ENCODE measurements at regions of chr13 and their contacts with region 1.

Region 1: GRCh38 chr13:38686577-38687245 is at the start of gene FREM2:
- DNase-seq: peak; percentile 76
- H3K4me3 ChIP-seq: peak within 1 kb of the TSS; percentile 59 to 63 (median 59)
- H3K27ac ChIP-seq: no peak within 1 kb of the TSS
- H3K4me1 ChIP-seq: peaks cover 16% of the 10 kb centered on the region
- H3K27me3 ChIP-seq: peaks cover 5% of the 10 kb centered on the region
- CTCF ChIP-seq: no peak
- total RNA-seq, gene FREM2: 0.16 to 5.7 TPM

Region 2: GRCh38 chr13:38763439-38764381 is 77.0 kb after region 1 on chr13:
- CTCF ChIA-PET with region 1: no interaction called
- dilution Hi-C with region 1: no loop called
- in situ Hi-C with region 1: no loop called
- intact Hi-C with region 1: loop called (anchors 1 kb)
- DNase-seq: peak; percentile 23
- H3K4me3 ChIP-seq: no peak overlapping the region
- H3K27ac ChIP-seq: no peak overlapping the region
- H3K4me1 ChIP-seq: peaks cover 10% of the 10 kb centered on the region
- H3K27me3 ChIP-seq: no peaks in the 10 kb centered on the region
- CTCF ChIP-seq: peak; percentile 75 to 83

Region 3: GRCh38 chr13:38796890-38797289 is 110.2 kb after region 1 on chr13:
- CTCF ChIA-PET with region 1: no interaction called
- dilution Hi-C with region 1: no loop called
- in situ Hi-C with region 1: no loop called
- intact Hi-C with region 1: no loop called
- DNase-seq: no peak
- H3K4me3 ChIP-seq: no peak overlapping the region
- H3K27ac ChIP-seq: no peak overlapping the region
- H3K4me1 ChIP-seq: no peaks in the 10 kb centered on the region
- H3K27me3 ChIP-seq: no peaks in the 10 kb centered on the region
- CTCF ChIP-seq: no peak

Region 4: DNA sequence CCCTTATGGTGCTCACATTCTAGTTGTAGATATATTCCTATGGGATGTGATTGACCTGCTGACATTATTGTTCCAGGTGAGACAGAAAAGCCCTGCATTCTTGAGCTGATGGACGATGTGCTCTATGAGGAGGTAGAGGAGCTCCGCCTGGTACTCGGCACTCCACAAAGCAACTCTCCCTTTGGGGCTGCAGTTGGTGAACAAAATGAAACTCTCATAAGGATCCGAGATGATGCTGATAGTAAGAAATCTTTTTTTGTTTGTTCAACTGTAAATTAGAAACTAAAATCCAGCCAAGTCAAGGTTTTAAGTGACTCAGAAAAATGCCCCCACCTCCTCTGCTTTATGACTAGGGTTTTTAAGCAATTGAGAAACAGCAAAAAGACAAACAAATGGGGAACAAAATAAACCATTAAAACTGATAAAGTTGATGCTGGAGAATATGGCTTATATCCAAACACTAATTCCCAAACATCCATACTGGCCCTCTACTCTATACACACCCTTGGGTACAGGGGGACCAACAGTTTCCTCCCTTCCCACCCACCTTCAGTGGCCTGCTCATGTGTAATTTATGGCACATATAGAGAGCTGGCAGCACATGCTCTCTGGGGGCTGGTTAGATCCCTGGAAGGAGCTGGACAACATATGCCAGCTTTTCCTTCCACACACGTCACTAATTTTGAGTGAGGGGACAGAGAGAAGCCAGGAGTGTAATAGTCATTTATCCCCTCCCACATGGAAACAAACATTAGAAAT is 164.3 kb after region 1 on chr13:
- CTCF ChIA-PET with region 1: interaction called, 10 read pairs
- dilution Hi-C with region 1: loop called (anchors 25 kb)
- in situ Hi-C with region 1: loop called in 1 of 2 experiments (anchors 25 kb)
- intact Hi-C with region 1: no loop called
- DNase-seq: no peak
- H3K4me3 ChIP-seq: no peak overlapping the region
- H3K27ac ChIP-seq: no peak overlapping the region
- H3K4me1 ChIP-seq: peaks cover 13% of the 10 kb centered on the region
- H3K27me3 ChIP-seq: no peaks in the 10 kb centered on the region
- CTCF ChIP-seq: no peak

Region 5: GRCh38 chr13:38872693-38873092 is 186.0 kb after region 1 on chr13:
- CTCF ChIA-PET with region 1: no interaction called
- dilution Hi-C with region 1: loop called (anchors 25 kb)
- in situ Hi-C with region 1: loop called in 1 of 2 experiments (anchors 25 kb)
- intact Hi-C with region 1: loop called (anchors 1 kb)
- DNase-seq: peak; percentile 28
- H3K4me3 ChIP-seq: no peak overlapping the region
- H3K27ac ChIP-seq: no peak overlapping the region
- H3K4me1 ChIP-seq: no peaks in the 10 kb centered on the region
- H3K27me3 ChIP-seq: no peaks in the 10 kb centered on the region
- CTCF ChIP-seq: peak; percentile 79 to 81

Region 6: DNA sequence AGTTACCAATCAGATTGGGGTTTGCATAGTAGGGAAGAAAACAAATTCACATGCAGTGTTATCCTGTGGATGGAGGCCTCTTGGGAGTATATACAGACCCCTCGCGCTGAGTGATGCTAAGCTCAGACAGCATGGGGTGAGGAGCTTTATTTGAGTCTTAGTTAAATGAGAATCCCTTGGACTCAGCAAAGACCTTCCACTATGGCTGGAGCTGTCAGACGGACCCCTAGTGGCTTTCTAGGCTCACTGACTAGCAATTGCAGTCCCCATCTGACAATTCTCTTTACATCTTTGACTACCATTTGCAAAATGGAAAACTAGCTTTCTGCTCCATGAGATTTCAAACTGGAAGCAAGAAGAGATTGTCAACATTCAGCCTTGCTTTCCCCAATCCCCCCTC is 213.5 kb after region 1 on chr13:
- CTCF ChIA-PET with region 1: no interaction called
- dilution Hi-C with region 1: no loop called
- in situ Hi-C with region 1: loop called in 1 of 2 experiments (anchors 25 kb)
- intact Hi-C with region 1: no loop called
- DNase-seq: no peak
- H3K4me3 ChIP-seq: no peak overlapping the region
- H3K27ac ChIP-seq: no peak overlapping the region
- H3K4me1 ChIP-seq: peaks cover 21% of the 10 kb centered on the region
- H3K27me3 ChIP-seq: no peaks in the 10 kb centered on the region
- CTCF ChIP-seq: peak in 1 of 2 donors; percentile 3

Region 7: DNA sequence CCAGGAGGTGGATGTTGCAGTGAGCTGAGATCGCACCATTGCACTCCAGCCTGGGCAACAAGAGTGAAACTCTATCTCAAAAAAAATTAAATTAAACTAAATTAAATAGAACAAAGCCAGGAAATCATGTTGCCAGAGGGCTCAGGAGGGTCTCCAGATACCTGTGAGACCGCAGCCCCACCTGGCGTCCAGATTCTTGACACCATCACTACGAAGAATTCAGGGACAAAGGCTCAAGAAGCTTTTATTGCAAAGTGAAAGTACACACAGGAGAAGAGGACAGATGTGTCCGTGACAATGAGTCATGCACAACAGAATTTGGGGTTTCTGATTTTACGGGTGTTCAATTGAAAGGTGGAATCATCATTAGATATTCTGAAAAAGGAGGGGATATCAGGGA is 227.4 kb after region 1 on chr13:
- CTCF ChIA-PET with region 1: no interaction called
- dilution Hi-C with region 1: no loop called
- in situ Hi-C with region 1: loop called in 1 of 2 experiments (anchors 25 kb)
- intact Hi-C with region 1: loop called (anchors 1 kb)
- DNase-seq: no peak
- H3K4me3 ChIP-seq: no peak overlapping the region
- H3K27ac ChIP-seq: no peak overlapping the region
- H3K4me1 ChIP-seq: peaks cover 11% of the 10 kb centered on the region
- H3K27me3 ChIP-seq: no peaks in the 10 kb centered on the region
- CTCF ChIP-seq: no peak

Region 8: DNA sequence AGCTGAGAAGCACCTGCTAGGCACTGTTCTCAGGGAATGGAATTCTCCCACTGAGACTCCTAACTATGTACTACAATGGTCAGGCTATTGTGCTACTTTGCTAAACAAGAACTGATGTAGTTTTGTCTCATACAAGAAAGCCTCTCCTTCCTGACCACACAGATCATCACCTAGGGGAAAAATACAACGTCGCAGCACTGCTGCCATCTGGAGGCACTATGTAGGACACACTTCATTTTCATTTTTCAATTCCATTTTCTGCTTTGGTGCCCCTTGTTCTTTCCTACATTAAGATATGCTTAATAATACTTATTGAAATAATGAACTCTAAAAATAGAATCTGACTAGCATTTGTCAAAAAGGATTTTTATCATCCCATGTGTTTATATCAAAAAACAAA is 330.1 kb after region 1 on chr13:
- CTCF ChIA-PET with region 1: no interaction called
- dilution Hi-C with region 1: no loop called
- in situ Hi-C with region 1: no loop called
- intact Hi-C with region 1: loop called (anchors 2 kb)
- DNase-seq: peak; percentile 37
- H3K4me3 ChIP-seq: no peak overlapping the region
- H3K27ac ChIP-seq: no peak overlapping the region
- H3K4me1 ChIP-seq: no peaks in the 10 kb centered on the region
- H3K27me3 ChIP-seq: no peaks in the 10 kb centered on the region
- CTCF ChIP-seq: peak; percentile 45 to 68

Measured in mammary epithelial cell (primary cell).